ENCODE measurements at regions of chr1 and their contacts with region 1.

Region 1: GRCh38 chr1:112674439-112674985 is at the start of gene MOV10:
- DNase-seq: peak; percentile 71
- H3K4me3 Mint-ChIP-seq: peak within 1 kb of the TSS; percentile 96
- H3K27ac Mint-ChIP-seq: peak within 1 kb of the TSS; percentile 91
- H3K4me1 Mint-ChIP-seq: peaks cover 43% of the 10 kb centered on the region
- H3K27me3 Mint-ChIP-seq: no peaks in the 10 kb centered on the region
- total RNA-seq, gene MOV10: 100 to 102 TPM

Region 2: GRCh38 chr1:112501810-112502641 is 172.5 kb before region 1 on chr1:
- CTCF ChIA-PET with region 1: interaction called, 15 read pairs
- POLR2A ChIA-PET with region 1: interaction called, 5 read pairs
- DNase-seq: peak; percentile 58
- H3K4me3 Mint-ChIP-seq: peak overlapping the region; percentile 40
- H3K27ac Mint-ChIP-seq: no peak overlapping the region
- H3K4me1 Mint-ChIP-seq: peaks cover 7% of the 10 kb centered on the region
- H3K27me3 Mint-ChIP-seq: peaks cover 58% of the 10 kb centered on the region

Region 3: DNA sequence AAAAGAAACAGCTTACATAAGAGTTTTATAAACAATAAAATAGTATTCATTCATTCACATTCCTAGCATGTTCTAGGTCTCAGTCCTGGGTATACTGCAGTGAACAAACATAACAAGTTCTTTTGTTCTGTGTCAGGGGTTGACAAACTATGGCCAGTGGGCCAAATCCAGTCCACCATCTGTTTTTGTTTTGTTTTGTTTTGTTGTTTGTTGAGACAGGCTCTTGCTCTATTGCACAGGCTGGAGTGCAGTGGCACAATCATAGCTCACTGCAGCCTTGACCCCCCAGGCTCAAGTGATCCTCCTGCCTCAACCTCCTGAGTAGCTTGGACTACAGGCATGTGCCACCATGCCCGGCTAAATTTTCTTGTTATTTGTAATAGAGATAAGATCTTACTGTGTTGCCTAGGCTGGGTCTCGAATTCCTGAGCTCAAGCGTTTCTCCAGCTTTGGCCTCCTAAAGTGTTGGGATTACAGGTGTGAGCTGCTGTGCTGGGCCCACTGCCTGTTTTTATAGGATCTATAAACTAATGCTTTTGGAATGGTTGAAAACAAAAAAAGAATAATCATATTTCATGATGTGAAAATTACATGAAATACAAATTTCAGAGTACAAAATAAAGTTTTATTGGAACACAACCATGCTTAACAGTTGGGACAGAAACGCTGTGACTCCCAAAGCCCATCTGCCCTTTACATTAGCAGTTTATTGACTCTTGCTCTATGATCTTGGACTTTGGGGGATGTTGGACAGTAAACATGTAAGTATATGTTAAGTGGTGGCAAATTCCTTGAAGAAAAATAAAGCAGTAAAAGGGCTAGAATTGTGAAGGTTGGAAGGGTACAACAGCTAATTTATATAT is 37.0 kb before region 1 on chr1:
- CTCF ChIA-PET with region 1: interaction called, 8 read pairs
- POLR2A ChIA-PET with region 1: interaction called, 32 read pairs
- DNase-seq: no peak
- H3K4me3 Mint-ChIP-seq: no peak overlapping the region
- H3K27ac Mint-ChIP-seq: no peak overlapping the region
- H3K4me1 Mint-ChIP-seq: peaks cover 53% of the 10 kb centered on the region
- H3K27me3 Mint-ChIP-seq: no peaks in the 10 kb centered on the region

Region 4: DNA sequence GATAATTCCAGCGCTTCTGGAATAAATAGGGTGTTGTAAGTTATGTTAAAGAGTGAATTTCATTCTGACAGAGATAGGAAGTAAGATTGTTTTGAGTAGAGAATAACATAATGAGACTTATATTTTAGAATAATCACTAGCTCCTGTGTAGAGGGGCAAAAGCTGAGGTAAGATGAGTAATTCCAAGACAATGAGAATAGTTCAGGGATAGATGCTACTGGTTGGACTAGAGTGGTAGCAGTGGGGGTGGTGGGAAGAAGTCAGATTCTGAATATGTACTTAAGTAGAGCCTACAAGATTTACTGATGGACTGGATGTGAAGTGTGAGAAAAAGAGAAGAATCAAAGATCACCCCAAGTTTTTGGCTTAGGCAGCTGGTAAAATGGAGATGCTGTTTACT is 23.3 kb before region 1 on chr1:
- CTCF ChIA-PET with region 1: interaction called, 5 read pairs
- POLR2A ChIA-PET with region 1: interaction called, 19 read pairs
- DNase-seq: no peak
- H3K4me3 Mint-ChIP-seq: no peak overlapping the region
- H3K27ac Mint-ChIP-seq: no peak overlapping the region
- H3K4me1 Mint-ChIP-seq: peaks cover 28% of the 10 kb centered on the region
- H3K27me3 Mint-ChIP-seq: no peaks in the 10 kb centered on the region

Region 5: GRCh38 chr1:112660072-112660471 is 14.4 kb before region 1 on chr1:
- CTCF ChIA-PET with region 1: interaction called, 9 read pairs
- POLR2A ChIA-PET with region 1: interaction called, 49 read pairs
- DNase-seq: no peak
- H3K4me3 Mint-ChIP-seq: no peak overlapping the region
- H3K27ac Mint-ChIP-seq: no peak overlapping the region
- H3K4me1 Mint-ChIP-seq: peaks cover 18% of the 10 kb centered on the region
- H3K27me3 Mint-ChIP-seq: no peaks in the 10 kb centered on the region

Region 6: DNA sequence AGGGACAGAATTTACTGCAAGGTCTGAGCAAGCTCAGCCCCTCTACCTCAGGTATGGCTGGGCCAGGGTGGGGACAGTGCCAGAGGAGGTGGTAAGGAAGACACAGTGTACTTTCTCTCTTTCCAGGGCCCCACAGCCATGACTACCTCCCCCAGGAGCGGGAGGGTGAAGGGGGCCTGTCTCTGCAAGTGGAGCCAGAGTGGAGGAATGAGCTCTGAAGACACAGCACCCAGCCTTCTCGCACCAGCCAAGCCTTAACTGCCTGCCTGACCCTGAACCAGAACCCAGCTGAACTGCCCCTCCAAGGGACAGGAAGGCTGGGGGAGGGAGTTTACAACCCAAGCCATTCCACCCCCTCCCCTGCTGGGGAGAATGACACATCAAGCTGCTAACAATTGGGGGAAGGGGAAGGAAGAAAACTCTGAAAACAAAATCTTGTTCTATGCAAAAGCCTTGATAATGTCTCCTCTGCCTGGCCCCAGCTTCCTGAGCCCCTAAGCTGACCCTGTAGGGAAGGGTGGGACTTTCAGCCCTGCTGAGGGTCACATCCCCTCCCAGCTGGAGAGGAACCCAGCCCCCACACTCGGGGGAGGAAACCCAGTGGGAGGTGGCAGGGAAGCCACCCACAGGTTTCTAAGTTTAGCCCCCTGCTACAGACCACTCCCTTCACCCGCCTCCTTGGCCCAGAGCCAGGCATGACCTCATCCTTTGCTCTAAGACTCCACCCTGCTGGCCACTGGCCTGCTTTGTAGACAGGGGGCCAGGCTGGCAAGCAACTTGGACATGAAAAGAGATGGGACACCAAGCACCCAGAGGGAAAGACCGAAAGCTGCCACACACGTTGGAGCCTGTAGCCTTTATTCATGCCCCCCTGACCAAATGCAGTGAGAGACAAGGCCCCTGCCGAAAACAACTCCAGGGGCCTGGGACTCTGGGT is 26.0 kb after region 1 on chr1:
- CTCF ChIA-PET with region 1: interaction called, 11 read pairs
- POLR2A ChIA-PET with region 1: interaction called, 46 read pairs
- DNase-seq: peak; percentile 77
- H3K4me3 Mint-ChIP-seq: no peak overlapping the region
- H3K27ac Mint-ChIP-seq: peak overlapping the region; percentile 85
- H3K4me1 Mint-ChIP-seq: peaks cover 62% of the 10 kb centered on the region
- H3K27me3 Mint-ChIP-seq: no peaks in the 10 kb centered on the region

Region 7: DNA sequence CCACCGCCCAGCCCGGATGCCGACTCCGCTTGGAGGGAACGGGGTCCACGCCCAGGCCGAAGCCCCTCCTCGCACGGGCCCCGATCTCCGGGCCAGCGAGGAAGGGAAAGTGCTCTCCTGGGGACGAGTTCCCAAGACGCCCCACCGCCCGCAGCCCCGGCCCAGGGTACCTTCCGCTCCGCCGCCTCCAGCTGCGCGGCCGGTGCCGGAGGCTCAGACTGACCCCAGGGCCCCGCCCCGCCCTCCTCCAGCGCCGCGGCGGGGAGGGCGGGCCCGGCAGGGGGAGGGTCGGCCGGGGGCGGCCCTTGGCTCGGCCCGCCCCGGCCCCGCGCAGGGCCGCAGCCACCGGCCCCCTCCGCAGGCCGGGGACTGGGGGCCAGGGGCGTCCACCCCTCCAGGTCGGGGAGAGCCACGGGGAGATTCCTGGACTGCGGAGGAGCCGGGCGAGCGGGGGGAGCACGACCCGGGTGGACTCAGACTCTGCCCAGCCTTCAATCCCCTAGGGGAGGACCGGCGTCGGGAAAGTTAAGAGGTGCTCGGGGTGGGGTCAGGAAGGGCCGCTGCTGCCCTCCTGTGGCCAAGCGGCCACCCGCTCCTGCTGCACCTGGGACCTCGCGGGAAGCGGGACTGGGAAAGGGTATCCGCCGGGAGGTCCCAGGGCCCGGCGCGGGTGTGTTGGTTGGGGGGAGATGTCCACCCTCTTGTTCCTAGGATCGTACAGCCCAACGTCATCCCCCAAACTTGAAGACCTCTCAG is 32.6 kb after region 1 on chr1 and contains the start of gene RHOC:
- CTCF ChIA-PET with region 1: interaction called, 22 read pairs
- POLR2A ChIA-PET with region 1: interaction called, 51 read pairs
- DNase-seq: peak; percentile 69
- H3K4me3 Mint-ChIP-seq: peak within 1 kb of the TSS; percentile 73
- H3K27ac Mint-ChIP-seq: peak within 1 kb of the TSS; percentile 89
- H3K4me1 Mint-ChIP-seq: peaks cover 49% of the 10 kb centered on the region
- H3K27me3 Mint-ChIP-seq: peaks cover 37% of the 10 kb centered on the region
- total RNA-seq, gene RHOC: 87.1 to 92.4 TPM

Region 8: DNA sequence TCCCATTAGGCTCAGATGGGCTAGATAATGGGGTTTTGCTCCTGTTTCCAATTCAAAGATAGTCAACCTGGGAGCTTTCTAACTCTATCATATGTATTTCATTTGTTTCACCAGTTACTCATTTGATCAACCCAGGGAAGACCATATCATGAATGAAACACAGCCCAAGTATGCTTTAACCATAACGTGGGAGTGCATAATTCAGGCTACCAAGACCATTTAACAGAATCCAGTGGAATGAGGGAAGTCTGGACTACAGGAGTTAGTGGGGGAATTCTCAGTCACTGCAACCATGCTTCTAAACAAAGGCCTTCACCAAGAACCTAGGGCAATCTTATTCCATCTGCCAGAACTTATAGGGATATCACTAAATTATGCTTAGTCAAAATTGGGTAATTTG is 296.5 kb after region 1 on chr1:
- CTCF ChIA-PET with region 1: no interaction called
- POLR2A ChIA-PET with region 1: no interaction called
- DNase-seq: no peak
- H3K4me3 Mint-ChIP-seq: no peak overlapping the region
- H3K27ac Mint-ChIP-seq: no peak overlapping the region
- H3K4me1 Mint-ChIP-seq: peaks cover 4% of the 10 kb centered on the region
- H3K27me3 Mint-ChIP-seq: no peaks in the 10 kb centered on the region

Measured in activated CD4-positive, alpha-beta memory T cell treated with anti-CD3 and anti-CD28 coated beads, Interleukin-2, amount 10 ng/mL, durations not matched to agents 7 days and 5 days (primary cell).